ENCODE measurements at regions of chr19 and their contacts with region 1.

Region 1: GRCh38 chr19:13241231-13242104 is 91.3 kb downstream of the IER2 start:
- DNase-seq: peak in 1 of 2 experiments; percentile 70
- H3K4me3 ChIP-seq: no peak overlapping the region
- H3K27ac ChIP-seq: no peak overlapping the region
- H3K4me1 ChIP-seq: peaks cover 0 to 7% (median 3%) of the 10 kb centered on the region in 4 experiments; a peak in 4 of 7 replicates
- H3K27me3 ChIP-seq: no peaks in the 10 kb centered on the region
- CTCF ChIP-seq: peak; percentile 53 to 86 (median 74)
- EP300 ChIP-seq: no peak
- POLR2A ChIP-seq: no peak
- RAD21 ChIP-seq: peak in 1 of 2 experiments; percentile 35; a peak in 2 of 4 replicates

Region 2: GRCh38 chr19:13212759-13213330 is 28.6 kb before region 1 on chr19:
- CTCF ChIA-PET with region 1: interaction called, 12 read pairs
- POLR2A ChIA-PET with region 1: no interaction called
- DNase-seq: peak in 1 of 2 experiments; percentile 86
- H3K4me3 ChIP-seq: no peak overlapping the region
- H3K27ac ChIP-seq: no peak overlapping the region
- H3K4me1 ChIP-seq: peaks cover 0 to 10% (median 3%) of the 10 kb centered on the region in 4 experiments; a peak in 3 of 7 replicates
- H3K27me3 ChIP-seq: no peaks in the 10 kb centered on the region
- CTCF ChIP-seq: peak; percentile 69 to 88 (median 80)
- EP300 ChIP-seq: no peak
- POLR2A ChIP-seq: no peak
- RAD21 ChIP-seq: peak; percentile 50 to 61

Region 3: DNA sequence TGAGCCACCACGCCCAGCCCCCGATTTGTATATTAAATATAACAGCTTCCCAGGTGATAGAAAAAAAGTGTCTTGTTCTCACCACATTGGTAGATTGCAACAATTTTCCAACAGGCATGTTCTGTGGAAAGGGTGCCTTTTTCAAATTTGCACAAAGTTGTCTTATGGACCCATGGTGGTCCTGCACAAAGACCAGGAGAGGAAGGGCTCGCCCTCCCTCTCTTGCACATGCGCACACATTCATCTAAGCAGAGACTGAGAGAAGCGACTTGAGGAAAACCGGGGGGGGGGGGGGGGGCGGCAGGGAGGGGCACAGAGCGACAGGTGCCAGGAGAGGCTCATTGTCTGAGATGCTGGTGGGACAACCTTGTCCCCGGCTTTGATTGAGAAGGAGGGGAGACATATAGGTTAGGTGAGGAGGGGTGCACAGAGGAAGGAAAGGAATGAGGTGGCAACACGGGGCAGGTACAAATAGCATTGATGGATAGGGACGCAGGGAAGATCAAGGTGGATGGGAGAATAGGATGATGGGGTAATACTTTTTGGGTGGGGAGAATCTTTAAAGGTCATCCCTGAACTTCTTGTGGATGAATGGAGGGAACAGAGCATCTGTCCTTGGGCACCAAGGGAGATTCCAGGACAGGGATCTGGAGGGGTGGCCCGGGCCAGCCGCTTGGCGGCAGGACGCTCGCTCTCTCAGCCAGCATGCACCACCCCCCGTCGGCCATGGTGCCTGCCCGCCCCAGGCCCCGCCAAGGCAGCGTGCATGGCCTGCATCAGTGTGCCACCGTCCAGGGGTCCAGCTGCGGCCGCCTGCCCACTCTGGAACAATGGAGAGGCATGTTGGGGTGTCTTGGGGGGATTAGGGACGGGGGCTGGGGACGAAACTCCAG is 15.2 kb before region 1 on chr19:
- CTCF ChIA-PET with region 1: no interaction called
- POLR2A ChIA-PET with region 1: no interaction called
- DNase-seq: no peak
- H3K4me3 ChIP-seq: no peak overlapping the region
- H3K27ac ChIP-seq: no peak overlapping the region
- H3K4me1 ChIP-seq: peaks cover 0 to 4% (median 0%) of the 10 kb centered on the region in 4 experiments; a peak in 3 of 7 replicates
- H3K27me3 ChIP-seq: no peaks in the 10 kb centered on the region
- CTCF ChIP-seq: no peak
- EP300 ChIP-seq: no peak
- POLR2A ChIP-seq: no peak
- RAD21 ChIP-seq: no peak

Region 4: DNA sequence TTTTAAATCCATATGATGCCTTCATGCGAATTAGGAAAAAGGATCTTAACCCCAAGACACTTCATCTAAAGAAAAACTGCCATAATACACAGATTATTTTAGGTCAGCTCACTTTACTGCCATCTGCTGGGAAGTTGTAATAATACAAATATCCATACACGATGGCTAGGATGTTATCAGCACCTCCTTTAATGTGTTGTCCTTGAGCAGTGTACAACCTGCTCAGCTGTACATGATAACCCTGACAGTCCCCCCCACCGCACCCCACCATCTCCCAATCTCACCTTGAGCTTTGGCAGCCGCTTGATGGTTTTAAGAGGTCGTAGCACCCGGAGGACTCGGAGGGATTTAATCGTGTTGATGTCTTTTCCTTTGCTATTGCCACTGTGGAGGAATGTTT is 21.0 kb after region 1 on chr19:
- CTCF ChIA-PET with region 1: interaction called, 12 read pairs
- POLR2A ChIA-PET with region 1: no interaction called
- DNase-seq: no peak
- H3K4me3 ChIP-seq: no peak overlapping the region
- H3K27ac ChIP-seq: no peak overlapping the region
- H3K4me1 ChIP-seq: no peaks in the 10 kb centered on the region
- H3K27me3 ChIP-seq: no peaks in the 10 kb centered on the region
- CTCF ChIP-seq: peak in 2 of 3 experiments; percentile 12 to 49; a peak in 2 of 4 replicates
- EP300 ChIP-seq: no peak
- POLR2A ChIP-seq: no peak
- RAD21 ChIP-seq: peak; percentile 27 to 40; a peak in 3 of 4 replicates

Region 5: GRCh38 chr19:13284929-13285928 is 43.8 kb after region 1 on chr19:
- CTCF ChIA-PET with region 1: no interaction called
- POLR2A ChIA-PET with region 1: no interaction called
- DNase-seq: no peak
- H3K4me3 ChIP-seq: no peak overlapping the region
- H3K27ac ChIP-seq: no peak overlapping the region
- H3K4me1 ChIP-seq: peaks cover 0 to 4% (median 1%) of the 10 kb centered on the region in 4 experiments; a peak in 3 of 7 replicates
- H3K27me3 ChIP-seq: no peaks in the 10 kb centered on the region
- CTCF ChIP-seq: no peak
- EP300 ChIP-seq: no peak
- POLR2A ChIP-seq: no peak
- RAD21 ChIP-seq: no peak

Region 6: GRCh38 chr19:13302526-13303270 is 61.2 kb after region 1 on chr19:
- CTCF ChIA-PET with region 1: no interaction called
- POLR2A ChIA-PET with region 1: no interaction called
- DNase-seq: no peak
- H3K4me3 ChIP-seq: no peak overlapping the region
- H3K27ac ChIP-seq: no peak overlapping the region
- H3K4me1 ChIP-seq: no peaks in the 10 kb centered on the region
- H3K27me3 ChIP-seq: no peaks in the 10 kb centered on the region
- CTCF ChIP-seq: no peak
- EP300 ChIP-seq: no peak
- POLR2A ChIP-seq: no peak
- RAD21 ChIP-seq: no peak

Measured in H1 (cell line).